ENCODE measurements at regions of chr13 and their contacts with region 1.

Region 1: DNA sequence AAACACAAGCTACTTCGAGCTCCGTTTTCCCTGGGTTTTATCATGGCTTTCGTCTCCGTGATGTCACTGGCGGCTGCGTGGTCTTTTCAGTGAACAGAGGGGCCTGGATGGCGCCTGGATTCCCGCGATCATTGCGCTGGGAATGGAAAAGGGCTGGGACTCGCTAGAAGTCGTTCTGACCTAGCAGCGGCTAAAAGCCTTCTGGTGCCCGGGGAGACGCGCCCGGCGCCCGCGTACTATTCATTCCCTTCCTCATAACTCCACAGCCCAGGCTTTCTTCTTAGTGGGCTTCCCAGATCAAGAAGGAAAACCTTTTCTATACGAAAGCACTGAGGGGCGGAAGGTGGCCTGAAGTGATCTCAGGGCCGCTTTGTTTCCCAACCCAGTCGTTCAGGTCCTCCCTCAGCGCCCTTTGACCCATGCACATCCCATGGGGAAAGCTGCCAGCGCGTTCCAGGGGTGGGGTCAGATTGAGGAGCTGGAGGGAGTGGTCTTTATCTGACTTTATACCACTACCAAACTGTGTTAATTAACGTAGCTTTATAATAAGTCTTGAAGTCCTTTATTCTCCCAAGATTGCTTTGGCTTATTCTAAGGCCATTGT is 96.6 kb downstream of the ELF1 start:
- DNase-seq: peak in 1 of 2 donors; percentile 51
- ATAC-seq: no peak
- H3K4me3 ChIP-seq: no peak overlapping the region
- H3K27ac ChIP-seq: no peak overlapping the region
- H3K4me1 ChIP-seq: no peaks in the 10 kb centered on the region
- H3K27me3 ChIP-seq: no peaks in the 10 kb centered on the region

Region 2: DNA sequence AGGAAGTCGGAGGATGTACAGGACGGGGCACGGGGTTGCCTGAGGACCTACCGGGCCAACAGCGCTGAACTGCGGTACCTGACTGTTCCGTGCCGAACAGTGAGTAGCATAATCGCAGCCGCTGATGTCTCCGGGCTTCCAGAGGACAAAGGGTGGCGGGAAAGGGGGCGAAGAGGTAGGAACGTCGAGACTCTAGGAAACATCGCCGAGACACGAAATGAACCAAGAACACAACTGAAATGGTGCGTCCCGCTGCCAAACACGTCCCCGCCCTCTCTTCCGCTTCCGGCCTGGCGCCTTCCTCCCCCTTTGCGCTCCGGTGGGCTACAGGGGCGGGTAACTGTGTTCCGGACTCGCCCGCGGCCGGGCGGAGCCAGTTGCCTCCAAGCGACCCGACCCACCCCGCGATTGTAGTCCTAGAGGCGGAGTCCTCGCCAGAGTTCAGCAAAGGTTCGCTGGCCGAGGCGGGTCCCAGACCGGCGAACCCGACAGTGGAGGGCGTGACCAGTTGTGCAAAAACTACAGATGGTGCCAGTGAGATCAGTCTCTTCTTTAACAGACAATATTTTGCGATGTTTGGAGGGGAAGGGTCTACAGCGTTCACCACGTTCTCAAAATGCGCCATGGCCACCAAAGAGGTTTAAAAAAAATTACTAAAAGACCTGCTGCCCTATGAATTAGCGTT is 151.5 kb before region 1 on chr13 and contains the start of gene MRPS31:
- intact Hi-C with region 1: loop called in 1 of 2 experiments (anchors 5 kb)
- DNase-seq: peak; percentile 97 to 98
- ATAC-seq: peak; percentile 99
- H3K4me3 ChIP-seq: peak within 1 kb of the TSS; percentile 61 to 62
- H3K27ac ChIP-seq: peak within 1 kb of the TSS in 1 of 2 donors; percentile 49
- H3K4me1 ChIP-seq: peaks cover 0 to 4% of the 10 kb centered on the region in 2 donors
- H3K27me3 ChIP-seq: no peaks in the 10 kb centered on the region
- total RNA-seq, gene MRPS31: 14.6 to 20.5 TPM

Region 3: GRCh38 chr13:40982772-40983171 is 60.2 kb after region 1 on chr13:
- intact Hi-C with region 1: loop called in 1 of 2 experiments (anchors 10 kb)
- DNase-seq: no peak
- ATAC-seq: peak; percentile 74
- H3K4me3 ChIP-seq: no peak overlapping the region
- H3K27ac ChIP-seq: no peak overlapping the region
- H3K4me1 ChIP-seq: peaks cover 2 to 4% of the 10 kb centered on the region in 2 donors
- H3K27me3 ChIP-seq: no peaks in the 10 kb centered on the region

Region 4: DNA sequence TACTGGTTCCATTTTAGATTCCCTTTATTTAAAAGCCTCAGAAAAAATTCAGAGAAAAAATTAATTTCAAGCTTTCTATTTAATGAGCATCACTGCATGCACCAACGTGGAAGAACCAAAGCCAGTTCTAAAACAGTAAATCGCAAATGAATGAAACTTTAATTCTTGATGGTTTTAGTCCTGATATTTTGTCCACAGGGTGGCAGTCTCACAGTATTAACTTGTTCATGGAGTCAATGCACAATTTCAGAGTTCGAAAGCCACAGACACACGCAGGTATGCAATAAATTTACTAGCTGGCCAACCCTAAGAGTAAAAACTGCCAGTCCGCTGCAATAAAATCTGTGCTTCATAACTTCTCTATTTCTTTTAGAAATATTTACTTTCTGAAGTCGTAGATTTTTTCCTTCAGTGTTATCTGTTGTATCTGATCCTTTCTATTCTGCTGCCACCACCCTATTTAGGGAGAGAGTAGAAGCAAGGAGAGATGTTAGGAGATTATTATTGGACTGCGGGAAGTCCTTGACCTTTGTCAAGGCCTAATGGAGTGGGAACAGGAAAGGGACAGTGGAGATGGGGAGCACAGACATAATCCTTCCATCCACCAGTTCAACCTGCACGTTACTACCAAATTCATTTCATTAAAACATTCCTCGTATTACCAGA is 131.8 kb after region 1 on chr13:
- intact Hi-C with region 1: loop called in 1 of 2 experiments (anchors 10 kb)
- DNase-seq: no peak
- ATAC-seq: peak; percentile 55
- H3K4me3 ChIP-seq: no peak overlapping the region
- H3K27ac ChIP-seq: no peak overlapping the region
- H3K4me1 ChIP-seq: peaks cover 4 to 6% of the 10 kb centered on the region in 2 donors
- H3K27me3 ChIP-seq: no peaks in the 10 kb centered on the region

Region 5: GRCh38 chr13:41061075-41061913 is 138.8 kb after region 1 on chr13 and contains the start of gene WBP4:
- intact Hi-C with region 1: loop called (anchors 5 to 10 kb)
- DNase-seq: peak; percentile 96 to 98
- ATAC-seq: peak; percentile 94
- H3K4me3 ChIP-seq: peak within 1 kb of the TSS; percentile 36 to 97
- H3K27ac ChIP-seq: peak within 1 kb of the TSS; percentile 94 to 96
- H3K4me1 ChIP-seq: peaks cover 1 to 7% of the 10 kb centered on the region in 2 donors
- H3K27me3 ChIP-seq: no peaks in the 10 kb centered on the region
- total RNA-seq, gene WBP4: 11.2 to 14.3 TPM

Measured in aorta (tissue), 5 donors.